ENCODE measurements at regions of chr12 and their contacts with region 1.

Region 1: GRCh38 chr12:59087077-59087673 is 166.9 kb upstream of the LRIG3 start:
- DNase-seq: no peak
- H3K4me3 ChIP-seq: no peak overlapping the region
- H3K27ac ChIP-seq: no peak overlapping the region
- H3K4me1 ChIP-seq: peaks cover 0 to 13% (median 0%) of the 10 kb centered on the region in 6 donors
- H3K27me3 ChIP-seq: no peaks in the 10 kb centered on the region
- CTCF ChIP-seq: peak in 5 of 11 experiments; percentile 11 to 49 (median 36)
- POLR2A ChIP-seq: no peak

Region 2: DNA sequence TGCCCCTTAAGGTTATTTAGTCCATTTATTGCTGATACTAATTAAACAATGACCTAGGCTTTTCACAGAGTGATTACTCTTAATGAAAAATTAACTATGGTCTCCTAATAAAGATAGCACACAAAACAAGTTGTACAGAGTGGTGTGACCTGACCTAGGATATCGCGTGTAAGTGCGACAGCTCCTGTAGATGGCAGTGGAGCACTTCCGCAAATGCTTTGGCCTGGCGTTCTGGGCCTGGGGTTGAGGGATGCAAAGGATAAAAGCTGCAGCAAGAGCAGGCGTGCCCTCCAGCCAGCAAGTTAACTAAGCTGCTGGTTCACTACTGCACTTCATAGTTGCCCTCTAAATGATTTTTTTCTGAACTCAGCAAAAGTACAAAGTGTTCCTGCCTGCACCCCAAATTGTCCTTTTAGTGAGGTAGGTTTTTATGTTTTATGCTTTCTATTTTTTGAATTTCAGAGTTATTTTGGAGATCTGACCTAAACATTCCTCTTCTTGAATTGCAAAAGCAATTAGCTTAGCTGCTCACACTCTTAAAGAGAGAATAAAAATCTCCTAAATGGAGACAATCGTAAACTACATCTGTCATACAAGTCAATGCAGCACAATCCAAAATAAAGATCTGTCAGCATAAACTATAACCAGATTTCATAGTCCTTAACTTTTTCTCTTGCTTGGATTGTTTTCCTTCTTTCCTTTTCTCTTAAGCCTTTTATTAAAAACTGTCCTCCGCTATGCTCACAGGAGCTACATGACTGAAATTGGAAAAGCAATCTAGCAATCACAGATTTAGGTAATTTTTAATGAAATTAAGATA is 546.5 kb before region 1 on chr12:
- intact Hi-C with region 1: loop called (anchors 5 kb)
- DNase-seq: peak; percentile 72
- H3K4me3 ChIP-seq: no peak overlapping the region
- H3K27ac ChIP-seq: no peak overlapping the region
- H3K4me1 ChIP-seq: no peaks in the 10 kb centered on the region
- H3K27me3 ChIP-seq: no peaks in the 10 kb centered on the region
- CTCF ChIP-seq: peak in 4 of 11 experiments; percentile 41 to 53 (median 46)
- POLR2A ChIP-seq: no peak

Region 3: GRCh38 chr12:59005195-59005955 is 81.8 kb before region 1 on chr12:
- intact Hi-C with region 1: no loop called
- DNase-seq: no peak
- H3K4me3 ChIP-seq: no peak overlapping the region
- H3K27ac ChIP-seq: no peak overlapping the region
- H3K4me1 ChIP-seq: no peaks in the 10 kb centered on the region
- H3K27me3 ChIP-seq: no peaks in the 10 kb centered on the region
- CTCF ChIP-seq: no peak
- POLR2A ChIP-seq: no peak

Region 4: GRCh38 chr12:59149997-59150642 is 62.9 kb after region 1 on chr12:
- intact Hi-C with region 1: no loop called
- DNase-seq: no peak
- H3K4me3 ChIP-seq: no peak overlapping the region
- H3K27ac ChIP-seq: no peak overlapping the region
- H3K4me1 ChIP-seq: no peaks in the 10 kb centered on the region
- H3K27me3 ChIP-seq: no peaks in the 10 kb centered on the region
- CTCF ChIP-seq: peak; percentile 53 to 90 (median 71)
- POLR2A ChIP-seq: no peak